ENCODE measurements at regions of chr12 and their contacts with region 1.

Region 1: GRCh38 chr12:97148941-97149559 is 242.0 kb downstream of the NEDD1 start:
- DNase-seq: no peak
- H3K4me3 ChIP-seq: no peak overlapping the region
- H3K27ac ChIP-seq: no peak overlapping the region
- H3K4me1 ChIP-seq: no peaks in the 10 kb centered on the region
- H3K27me3 ChIP-seq: no peaks in the 10 kb centered on the region
- CTCF ChIP-seq: peak; percentile 59 to 75 (median 64)
- EP300 ChIP-seq: no peak
- POLR2A ChIP-seq: no peak

Region 2: DNA sequence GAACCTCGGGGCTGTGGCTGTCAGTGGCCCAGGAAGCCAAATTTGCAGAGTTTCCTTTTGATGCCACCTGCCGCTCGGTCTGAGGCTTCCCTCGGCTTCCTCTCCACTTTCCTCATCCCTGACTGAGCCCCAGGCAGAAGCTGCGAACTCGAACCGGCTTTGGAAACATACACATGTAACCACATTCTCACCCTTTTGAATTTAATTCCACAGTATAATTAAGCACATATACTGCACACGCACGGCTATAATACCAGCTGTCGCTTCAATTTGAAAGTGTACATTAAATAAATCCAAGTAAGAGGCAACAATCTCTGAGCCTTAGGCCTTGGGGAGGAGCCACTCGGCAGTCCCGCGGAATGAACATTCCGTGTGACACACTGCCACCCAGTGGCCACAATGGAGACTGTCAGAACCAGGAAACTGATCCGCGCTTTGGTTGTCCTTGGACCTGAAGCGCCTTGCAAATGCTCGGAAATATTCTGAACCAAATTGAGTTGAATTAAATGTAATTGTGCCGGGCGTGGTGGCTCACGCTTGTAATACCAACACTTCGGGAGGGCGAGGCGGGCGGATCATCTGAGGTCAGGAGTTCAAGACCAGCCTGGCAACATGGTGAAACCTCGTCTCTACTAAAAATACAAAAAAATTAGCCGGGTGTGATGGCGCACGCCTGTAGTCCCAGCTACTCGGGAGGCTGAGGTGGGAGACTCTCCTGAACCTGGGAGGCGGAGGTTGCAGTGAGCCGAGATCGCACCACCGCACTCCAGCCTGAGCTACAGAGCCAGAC is 1248.5 kb after region 1 on chr12:
- intact Hi-C with region 1: loop called (anchors 10 kb)
- DNase-seq: no peak
- H3K4me3 ChIP-seq: peak overlapping the region; percentile 42 to 56 (median 47)
- H3K27ac ChIP-seq: peak overlapping the region in 3 of 4 donors; percentile 16 to 45 (median 36)
- H3K4me1 ChIP-seq: peaks cover 0 to 13% (median 11%) of the 10 kb centered on the region in 4 donors
- H3K27me3 ChIP-seq: no peaks in the 10 kb centered on the region
- CTCF ChIP-seq: peak; percentile 88 to 89 (median 89)
- EP300 ChIP-seq: no peak
- POLR2A ChIP-seq: no peak

Measured in esophagus muscularis mucosa (tissue), 4 donors.